SK-N-SH (cell line): ENCODE measurements at regions of chr18 and their contacts with region 1.

Region 1: DNA sequence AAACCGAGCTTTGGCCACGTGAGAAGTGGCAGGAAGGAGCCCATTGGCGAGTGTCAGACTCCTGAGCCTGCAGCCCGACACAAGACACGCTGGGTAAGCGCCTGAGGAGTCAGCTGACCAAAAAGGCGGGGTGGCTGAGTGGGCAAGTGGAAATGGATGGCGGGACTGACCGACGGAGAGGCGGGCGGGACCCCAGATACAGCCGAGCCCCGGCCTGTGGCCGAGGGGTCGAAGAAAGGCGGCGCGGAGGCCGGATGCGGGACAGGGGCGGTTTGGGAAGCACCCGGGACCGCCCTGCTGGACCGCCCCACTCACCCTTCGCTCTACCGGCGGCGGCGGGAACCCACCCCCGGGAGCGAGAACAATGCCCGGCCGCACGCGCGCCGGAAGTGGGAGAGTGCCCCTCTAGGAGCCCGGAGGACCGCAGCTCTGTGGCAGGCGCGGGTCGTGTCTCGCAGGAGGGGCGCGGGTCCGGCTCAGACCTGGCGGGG is 22.8 kb downstream of the ZSCAN30 start:
- DNase-seq: peak; percentile 92
- H3K4me3 ChIP-seq: peak overlapping the region in 1 of 2 experiments; percentile 40; a peak in 2 of 4 replicates
- H3K27ac ChIP-seq: peak overlapping the region in 1 of 2 experiments; percentile 62; a peak in 1 of 4 replicates
- H3K4me1 ChIP-seq: no peaks in the 10 kb centered on the region; a peak in 1 of 4 replicates
- H3K27me3 ChIP-seq: no peaks in the 10 kb centered on the region
- CTCF ChIP-seq: no peak
- EP300 ChIP-seq: no peak
- RAD21 ChIP-seq: no peak

Region 2: GRCh38 chr18:35240664-35241447 is 26.4 kb before region 1 on chr18 and contains the start of gene ZNF397:
- CTCF ChIA-PET with region 1: interaction called, 8 read pairs
- POLR2A ChIA-PET with region 1: interaction called, 11 read pairs
- DNase-seq: peak; percentile 94
- H3K4me3 ChIP-seq: peak within 1 kb of the TSS; percentile 65
- H3K27ac ChIP-seq: peak within 1 kb of the TSS; percentile 95 to 97
- H3K4me1 ChIP-seq: peaks cover 3 to 10% of the 10 kb centered on the region in 2 experiments; a peak in 3 of 4 replicates
- H3K27me3 ChIP-seq: no peaks in the 10 kb centered on the region
- CTCF ChIP-seq: no peak
- EP300 ChIP-seq: peak in 1 of 2 experiments; percentile 42; a peak in 1 of 4 replicates
- RAD21 ChIP-seq: peak; percentile 8; the same call in 1 of the 2 replicates
- polyA plus RNA-seq, gene ZNF397: 4.8 and 7.4 TPM in 2 replicates

Region 3: DNA sequence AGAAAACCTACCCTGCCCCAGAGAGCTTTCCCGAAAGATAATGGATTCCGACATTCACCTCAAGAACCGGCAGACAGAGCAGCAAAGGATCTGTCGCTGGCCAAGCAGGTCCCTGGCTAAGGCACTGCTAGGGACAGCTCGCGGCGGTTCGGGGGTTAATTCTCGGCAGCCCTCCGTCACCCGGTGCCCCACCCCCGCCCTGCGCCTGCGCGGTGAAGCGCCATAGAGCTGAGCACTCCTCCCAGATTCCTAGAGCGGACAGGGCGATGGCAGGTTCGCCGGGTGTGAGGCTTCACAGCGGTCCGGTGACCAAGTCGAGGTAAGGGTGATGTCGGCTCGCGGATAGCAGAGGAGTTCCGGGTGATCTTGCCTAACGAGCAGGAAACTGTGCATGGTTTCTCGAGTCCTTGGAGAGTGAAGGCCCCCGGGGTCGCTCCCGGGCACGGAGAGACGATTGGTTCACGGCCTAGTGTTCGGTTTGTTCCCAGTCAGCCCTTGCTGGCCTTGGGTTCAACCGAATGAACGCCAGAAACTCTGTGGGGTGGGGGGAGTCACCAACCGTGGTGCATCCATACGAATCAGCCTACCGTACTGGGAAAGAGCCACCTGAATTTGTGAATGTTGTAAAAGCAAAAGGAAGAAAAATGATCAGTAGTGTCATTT is 23.0 kb after region 1 on chr18 and contains the start of gene ZSCAN30:
- CTCF ChIA-PET with region 1: interaction called, 4 read pairs
- POLR2A ChIA-PET with region 1: interaction called, 21 read pairs
- DNase-seq: peak; percentile 93
- H3K4me3 ChIP-seq: peak within 1 kb of the TSS; percentile 87 to 91
- H3K27ac ChIP-seq: peak within 1 kb of the TSS; percentile 61 to 78
- H3K4me1 ChIP-seq: peaks cover 0 to 6% of the 10 kb centered on the region in 2 experiments; a peak in 1 of 4 replicates
- H3K27me3 ChIP-seq: no peaks in the 10 kb centered on the region
- CTCF ChIP-seq: no peak
- EP300 ChIP-seq: peak in 1 of 2 experiments; percentile 4; a peak in 1 of 4 replicates
- RAD21 ChIP-seq: no peak
- polyA plus RNA-seq, gene ZSCAN30: 5.9 and 7.0 TPM in 2 replicates

Region 4: DNA sequence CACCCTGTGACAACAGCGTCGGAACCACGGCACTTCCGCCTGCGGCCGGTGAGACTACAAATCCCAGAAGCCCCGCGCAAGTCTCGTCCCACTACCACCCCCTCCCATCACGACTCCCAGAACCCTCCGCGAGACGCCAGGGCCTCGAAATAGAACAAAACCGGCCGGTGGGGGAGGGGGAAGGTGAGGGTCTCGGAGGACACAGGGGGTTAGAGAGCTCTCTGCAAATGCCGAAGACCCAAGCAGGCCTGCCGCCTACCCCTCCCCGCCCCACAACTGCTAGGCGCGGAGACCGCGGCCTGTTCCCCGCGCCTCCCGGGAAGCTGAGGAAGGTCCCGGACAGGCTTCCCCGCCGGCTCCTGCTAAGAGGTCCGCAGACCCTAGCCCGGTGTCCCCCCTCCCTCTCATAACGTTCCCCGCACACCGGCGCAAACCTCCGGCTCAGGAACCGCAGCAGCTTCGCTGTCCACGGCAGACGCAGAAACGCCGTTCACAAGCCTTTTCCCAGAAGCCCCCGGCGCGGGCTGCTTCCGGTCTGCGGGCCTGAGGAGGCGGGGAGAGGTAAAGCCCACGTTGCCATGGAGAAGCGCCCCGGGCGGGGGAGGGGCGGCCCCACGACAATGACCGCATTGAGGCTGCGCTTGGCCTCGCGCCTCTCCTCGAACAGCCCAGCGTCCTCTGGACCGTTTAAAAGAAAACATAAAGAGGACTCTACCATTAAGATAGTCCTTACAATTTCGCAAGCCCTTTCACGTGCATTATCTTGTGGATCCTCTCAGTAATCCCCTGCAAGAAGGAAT is 76.9 kb after region 1 on chr18 and contains the start of gene ZNF24:
- CTCF ChIA-PET with region 1: no interaction called
- POLR2A ChIA-PET with region 1: interaction called, 13 read pairs
- DNase-seq: peak; percentile 95
- H3K4me3 ChIP-seq: peak within 1 kb of the TSS; percentile 81 to 83
- H3K27ac ChIP-seq: peak within 1 kb of the TSS; percentile 96 to 98
- H3K4me1 ChIP-seq: peaks cover 0 to 15% of the 10 kb centered on the region in 2 experiments; a peak in 3 of 4 replicates
- H3K27me3 ChIP-seq: no peaks in the 10 kb centered on the region
- CTCF ChIP-seq: no peak
- EP300 ChIP-seq: peak in 1 of 2 experiments; percentile 12; a peak in 2 of 4 replicates
- RAD21 ChIP-seq: no peak
- polyA plus RNA-seq, gene ZNF24: 6.9 and 10.0 TPM in 2 replicates